Breast epithelium (tissue), 4 donors: ENCODE measurements at regions of chr3 and their contacts with region 1.

Region 1: GRCh38 chr3:135109681-135110080 is 314.6 kb downstream of the EPHB1 start:
- DNase-seq: no peak
- H3K4me3 ChIP-seq: no peak overlapping the region
- H3K27ac ChIP-seq: no peak overlapping the region
- H3K4me1 ChIP-seq: no peaks in the 10 kb centered on the region
- H3K27me3 ChIP-seq: no peaks in the 10 kb centered on the region
- CTCF ChIP-seq: no peak
- POLR2A ChIP-seq: no peak

Region 2: DNA sequence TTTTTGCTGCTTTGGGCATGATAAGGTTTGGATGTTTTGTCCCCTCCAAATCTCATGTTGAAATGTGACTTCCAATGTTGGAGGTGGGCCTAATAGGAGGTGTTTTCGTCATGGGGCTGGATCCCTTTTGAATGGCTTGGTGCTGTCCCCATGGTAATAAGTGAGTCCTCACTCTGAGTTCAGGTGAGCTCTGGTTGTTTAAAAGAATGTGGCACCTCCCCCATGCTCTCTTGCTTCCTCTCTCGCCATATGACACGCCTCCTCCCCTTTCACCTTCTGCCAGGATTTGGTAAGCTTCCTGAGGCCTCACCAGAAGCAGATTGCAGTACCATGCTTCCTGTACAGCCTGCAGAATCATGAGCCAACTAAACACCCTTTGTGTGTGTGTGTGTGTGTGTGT is 59.1 kb before region 1 on chr3:
- intact Hi-C with region 1: no loop called
- DNase-seq: no peak
- H3K4me3 ChIP-seq: no peak overlapping the region
- H3K27ac ChIP-seq: no peak overlapping the region
- H3K4me1 ChIP-seq: no peaks in the 10 kb centered on the region
- H3K27me3 ChIP-seq: no peaks in the 10 kb centered on the region
- CTCF ChIP-seq: no peak
- POLR2A ChIP-seq: no peak

Region 3: GRCh38 chr3:135084405-135084804 is 25.3 kb before region 1 on chr3:
- intact Hi-C with region 1: loop called (anchors 1 kb)
- DNase-seq: no peak
- H3K4me3 ChIP-seq: no peak overlapping the region
- H3K27ac ChIP-seq: no peak overlapping the region
- H3K4me1 ChIP-seq: no peaks in the 10 kb centered on the region
- H3K27me3 ChIP-seq: no peaks in the 10 kb centered on the region
- CTCF ChIP-seq: no peak
- POLR2A ChIP-seq: no peak

Region 4: DNA sequence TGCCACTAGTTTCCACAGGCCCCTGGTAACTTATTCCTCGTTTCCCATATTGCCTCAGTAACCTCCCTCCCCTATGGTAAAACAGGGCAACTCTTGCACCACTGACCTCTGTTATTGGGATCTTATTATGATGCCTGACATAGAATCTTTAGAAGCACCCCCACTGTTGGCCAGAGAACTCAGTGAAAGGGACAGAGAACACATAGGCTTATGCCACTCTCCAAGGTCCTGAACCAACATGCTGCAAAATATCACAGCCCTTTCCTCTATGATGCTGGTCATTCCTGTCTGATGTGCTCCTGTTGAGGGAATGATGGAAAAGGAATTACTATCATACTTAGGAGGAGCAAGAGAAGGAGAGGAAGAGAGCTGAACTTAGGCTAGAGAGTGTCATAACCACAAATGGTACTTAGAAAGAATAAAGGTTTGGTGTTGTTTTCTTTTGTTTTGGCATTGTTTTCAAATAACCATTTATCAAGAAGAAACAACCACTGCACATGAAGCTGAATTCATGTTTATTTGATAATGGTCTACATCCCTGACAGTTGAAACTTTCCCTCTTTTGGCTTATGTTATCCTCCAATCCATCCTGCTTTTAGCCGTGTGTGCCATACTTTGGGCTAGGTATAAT is 15.6 kb after region 1 on chr3:
- intact Hi-C with region 1: no loop called
- DNase-seq: no peak
- H3K4me3 ChIP-seq: no peak overlapping the region
- H3K27ac ChIP-seq: no peak overlapping the region
- H3K4me1 ChIP-seq: no peaks in the 10 kb centered on the region
- H3K27me3 ChIP-seq: no peaks in the 10 kb centered on the region
- CTCF ChIP-seq: no peak
- POLR2A ChIP-seq: no peak